ENCODE measurements at regions of chr5 and their contacts with region 1.

Region 1: DNA sequence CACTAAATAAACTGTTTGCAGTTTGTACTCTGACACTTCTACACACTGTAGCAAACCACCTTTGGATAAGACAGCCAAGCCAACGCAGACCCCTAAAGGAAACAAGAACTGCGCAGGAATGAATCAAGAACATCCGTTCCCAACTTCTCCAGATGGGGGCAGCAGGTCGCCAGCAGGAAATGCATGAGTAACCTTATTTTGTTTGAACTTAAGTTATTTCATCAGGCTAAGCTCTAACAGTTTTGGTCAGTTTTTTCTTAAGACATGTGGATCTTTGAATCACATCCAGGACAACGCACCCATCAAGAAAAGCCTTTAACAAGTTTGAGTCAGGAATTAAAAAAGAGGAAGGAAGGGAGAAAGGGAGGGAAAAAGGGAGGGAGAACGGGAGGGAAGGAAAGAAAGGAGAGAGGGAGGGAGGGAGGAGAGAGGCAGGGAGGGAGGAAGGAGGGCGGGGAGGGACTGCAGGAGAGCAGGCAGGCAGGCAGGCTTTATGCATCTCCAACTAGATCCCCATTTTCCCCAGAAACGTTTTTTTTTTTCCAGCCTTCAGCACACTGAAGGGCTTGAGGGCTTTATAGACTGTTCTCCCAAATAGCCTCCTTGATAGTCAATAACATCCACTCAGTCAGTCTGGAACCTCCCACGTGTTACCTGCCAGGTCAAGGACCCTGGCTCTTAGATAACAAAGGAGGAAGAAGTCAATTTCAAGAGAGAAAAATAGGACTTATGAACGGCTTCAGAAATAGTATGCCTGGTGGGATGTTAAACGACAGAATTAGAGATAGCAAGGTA is 22.2 kb downstream of the BHMT start:
- DNase-seq: peak; percentile 69
- H3K4me3 ChIP-seq: peak overlapping the region; percentile 43 to 59
- H3K27ac ChIP-seq: peak overlapping the region; percentile 74 to 82
- H3K4me1 ChIP-seq: peaks cover 0 to 12% of the 10 kb centered on the region in 2 experiments; a peak in 2 of 4 replicates
- H3K27me3 ChIP-seq: no peaks in the 10 kb centered on the region
- CTCF ChIP-seq: peak; percentile 81
- EP300 ChIP-seq: no peak
- RAD21 ChIP-seq: peak; percentile 81

Region 2: GRCh38 chr5:78936548-78936947 is 197.3 kb before region 1 on chr5:
- CTCF ChIA-PET with region 1: no interaction called
- POLR2A ChIA-PET with region 1: no interaction called
- DNase-seq: no peak
- H3K4me3 ChIP-seq: no peak overlapping the region
- H3K27ac ChIP-seq: no peak overlapping the region
- H3K4me1 ChIP-seq: no peaks in the 10 kb centered on the region; a peak in 1 of 4 replicates
- H3K27me3 ChIP-seq: no peaks in the 10 kb centered on the region
- CTCF ChIP-seq: no peak
- EP300 ChIP-seq: no peak
- RAD21 ChIP-seq: no peak

Region 3: DNA sequence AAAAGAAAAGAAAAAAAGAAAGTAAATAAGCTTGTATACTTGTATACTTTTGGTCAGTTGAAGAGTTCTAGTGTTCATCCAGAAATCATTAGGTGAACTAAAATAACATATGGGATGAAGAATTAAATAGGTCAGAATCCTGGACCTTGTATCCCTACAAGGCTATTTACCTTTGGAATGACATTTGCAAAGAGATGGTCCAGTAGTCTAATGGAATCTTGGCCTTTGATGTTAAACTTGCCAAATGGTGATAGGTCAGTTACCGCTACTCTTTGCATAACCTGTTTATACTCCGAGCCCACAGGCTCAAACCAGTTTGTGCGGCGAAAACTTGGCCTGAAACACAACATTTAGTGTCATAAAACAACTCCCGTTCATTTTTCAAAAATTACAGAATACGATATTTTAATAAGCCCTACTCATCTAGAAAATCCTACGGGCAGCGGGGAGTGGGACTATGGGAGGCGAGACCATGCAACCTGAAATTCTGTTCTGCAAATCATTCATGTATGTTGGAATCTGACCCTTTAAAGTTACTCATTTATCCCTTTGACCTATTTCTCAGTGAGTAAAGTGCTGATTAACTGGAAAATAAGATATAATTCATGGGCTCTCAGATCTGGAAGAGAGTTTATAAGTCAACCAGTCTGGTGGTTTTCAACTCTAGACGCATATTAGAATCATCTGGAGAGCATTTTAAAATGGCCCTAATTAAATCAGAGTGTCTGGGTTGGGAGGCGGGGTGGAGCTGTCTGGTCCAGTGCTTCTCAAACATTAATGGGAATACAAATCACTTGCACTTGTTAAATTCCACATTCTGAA is 103.0 kb before region 1 on chr5:
- CTCF ChIA-PET with region 1: interaction called, 585 read pairs
- POLR2A ChIA-PET with region 1: interaction called, 7 read pairs
- DNase-seq: peak; percentile 46
- H3K4me3 ChIP-seq: no peak overlapping the region
- H3K27ac ChIP-seq: peak overlapping the region in 1 of 2 experiments; percentile 94; a peak in 2 of 4 replicates
- H3K4me1 ChIP-seq: peaks cover 0 to 12% of the 10 kb centered on the region in 2 experiments; a peak in 2 of 4 replicates
- H3K27me3 ChIP-seq: no peaks in the 10 kb centered on the region
- CTCF ChIP-seq: no peak
- EP300 ChIP-seq: peak in 1 of 2 experiments; percentile 78; a peak in 2 of 4 replicates
- RAD21 ChIP-seq: no peak

Region 4: DNA sequence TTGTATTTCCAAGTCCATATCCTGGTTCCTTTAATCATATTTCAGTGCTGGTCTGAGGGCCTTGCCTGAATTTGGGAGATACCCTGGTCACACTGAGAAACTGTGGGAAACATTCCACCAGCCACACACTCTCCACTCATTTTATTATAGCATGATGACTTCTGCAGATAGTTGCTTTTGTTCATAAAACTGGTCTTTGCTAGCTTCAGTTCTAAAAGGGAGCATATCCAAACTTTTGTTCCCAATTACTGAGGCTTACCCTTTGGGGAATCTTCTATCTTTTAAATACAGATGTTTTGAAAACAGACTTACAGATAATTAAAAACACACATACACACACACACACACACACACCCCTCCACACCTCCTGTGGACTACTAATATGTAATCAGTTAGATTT is 85.4 kb before region 1 on chr5:
- CTCF ChIA-PET with region 1: interaction called, 18 read pairs
- POLR2A ChIA-PET with region 1: no interaction called
- DNase-seq: no peak
- H3K4me3 ChIP-seq: no peak overlapping the region
- H3K27ac ChIP-seq: peak overlapping the region in 1 of 2 experiments; percentile 51; a peak in 2 of 4 replicates
- H3K4me1 ChIP-seq: peaks cover 0 to 9% of the 10 kb centered on the region in 2 experiments; a peak in 2 of 4 replicates
- H3K27me3 ChIP-seq: no peaks in the 10 kb centered on the region; the same call in 1 of the 2 replicates
- CTCF ChIP-seq: no peak
- EP300 ChIP-seq: no peak
- RAD21 ChIP-seq: no peak

Region 5: GRCh38 chr5:79107020-79107796 is 26.6 kb before region 1 on chr5:
- CTCF ChIA-PET with region 1: interaction called, 15 read pairs
- POLR2A ChIA-PET with region 1: no interaction called
- DNase-seq: no peak
- H3K4me3 ChIP-seq: no peak overlapping the region
- H3K27ac ChIP-seq: peak overlapping the region in 1 of 2 experiments; percentile 48; a peak in 2 of 4 replicates
- H3K4me1 ChIP-seq: peaks cover 0 to 14% of the 10 kb centered on the region in 2 experiments; a peak in 2 of 4 replicates
- H3K27me3 ChIP-seq: peaks cover 2% of the 10 kb centered on the region; the same call in 1 of the 2 replicates
- CTCF ChIP-seq: no peak
- EP300 ChIP-seq: no peak
- RAD21 ChIP-seq: no peak

Region 6: DNA sequence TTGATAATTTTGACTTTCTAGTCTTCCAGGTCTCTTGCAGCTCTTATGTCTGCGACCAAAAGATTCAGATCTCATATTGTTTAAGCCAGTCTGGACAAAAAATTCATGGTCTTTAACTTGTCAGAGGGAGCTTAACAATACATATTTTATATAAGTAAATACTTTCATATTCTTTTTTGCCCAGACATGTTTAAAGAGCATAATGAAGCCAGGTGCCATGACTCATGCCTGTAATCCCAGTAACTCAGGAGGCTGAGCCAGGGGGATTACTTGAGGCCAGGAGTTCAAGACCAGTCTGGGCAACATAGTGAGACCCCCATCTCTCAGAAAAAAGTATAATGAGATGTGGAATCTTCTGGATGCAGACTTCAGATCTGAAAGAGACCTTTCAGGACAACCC is 171.9 kb after region 1 on chr5:
- CTCF ChIA-PET with region 1: no interaction called
- POLR2A ChIA-PET with region 1: no interaction called
- DNase-seq: no peak
- H3K4me3 ChIP-seq: no peak overlapping the region
- H3K27ac ChIP-seq: no peak overlapping the region
- H3K4me1 ChIP-seq: no peaks in the 10 kb centered on the region
- H3K27me3 ChIP-seq: no peaks in the 10 kb centered on the region
- CTCF ChIP-seq: no peak
- EP300 ChIP-seq: no peak
- RAD21 ChIP-seq: no peak

Region 7: GRCh38 chr5:79448336-79448735 is 314.5 kb after region 1 on chr5:
- CTCF ChIA-PET with region 1: interaction called, 12 read pairs
- POLR2A ChIA-PET with region 1: no interaction called
- DNase-seq: no peak
- H3K4me3 ChIP-seq: no peak overlapping the region
- H3K27ac ChIP-seq: no peak overlapping the region
- H3K4me1 ChIP-seq: peaks cover 0 to 12% of the 10 kb centered on the region in 2 experiments; a peak in 2 of 4 replicates
- H3K27me3 ChIP-seq: no peaks in the 10 kb centered on the region
- CTCF ChIP-seq: no peak
- EP300 ChIP-seq: no peak
- RAD21 ChIP-seq: no peak

Region 8: GRCh38 chr5:79513704-79514390 is 380.0 kb after region 1 on chr5 and contains the start of gene HOMER1:
- CTCF ChIA-PET with region 1: interaction called, 10 read pairs
- POLR2A ChIA-PET with region 1: no interaction called
- DNase-seq: peak; percentile 93
- H3K4me3 ChIP-seq: peak within 1 kb of the TSS; percentile 74 to 88
- H3K27ac ChIP-seq: peak within 1 kb of the TSS; percentile 85 to 98
- H3K4me1 ChIP-seq: peaks cover 13 to 19% of the 10 kb centered on the region in 2 experiments; a peak in 3 of 4 replicates
- H3K27me3 ChIP-seq: no peaks in the 10 kb centered on the region
- CTCF ChIP-seq: no peak; the same call in 1 of the 2 replicates
- EP300 ChIP-seq: no peak; a peak in 1 of 4 replicates
- RAD21 ChIP-seq: no peak
- polyA plus RNA-seq, gene HOMER1: 2.2 and 2.9 TPM in 2 replicates